ENCODE measurements at regions of chr14 and their contacts with region 1.

Region 1: GRCh38 chr14:105689728-105690127 is 163.3 kb downstream of the TMEM121 start:
- DNase-seq: no peak
- ATAC-seq: no peak
- H3K4me3 ChIP-seq: no peak overlapping the region
- H3K27ac ChIP-seq: peak overlapping the region; percentile 78
- H3K4me1 ChIP-seq: peaks cover 60% of the 10 kb centered on the region
- H3K27me3 ChIP-seq: no peaks in the 10 kb centered on the region
- CTCF ChIP-seq: no peak
- EP300 ChIP-seq: no peak
- POLR2A ChIP-seq: no peak
- RAD21 ChIP-seq: no peak

Region 2: GRCh38 chr14:105568859-105569708 is 120.6 kb before region 1 on chr14:
- CTCF ChIA-PET with region 1: no interaction called
- POLR2A ChIA-PET with region 1: no interaction called
- RAD21 ChIA-PET with region 1: no interaction called
- SMC1A ChIA-PET with region 1: no interaction called
- in situ Hi-C with region 1: no loop called
- intact Hi-C with region 1: loop called (anchors 5 kb)
- DNase-seq: no peak
- ATAC-seq: no peak
- H3K4me3 ChIP-seq: no peak overlapping the region
- H3K27ac ChIP-seq: peak overlapping the region; percentile 88
- H3K4me1 ChIP-seq: peaks cover 65% of the 10 kb centered on the region
- H3K27me3 ChIP-seq: no peaks in the 10 kb centered on the region
- CTCF ChIP-seq: no peak
- EP300 ChIP-seq: no peak
- POLR2A ChIP-seq: no peak
- RAD21 ChIP-seq: no peak

Measured in GM12878 (cell line).